ENCODE measurements at regions of chr16 and their contacts with region 1.

Region 1: GRCh38 chr16:35188288-35189155 is 1729.1 kb downstream of the TP53TG3F start:
- DNase-seq: no peak
- H3K4me3 ChIP-seq: no peak overlapping the region
- H3K27ac ChIP-seq: no peak overlapping the region
- H3K4me1 ChIP-seq: no peaks in the 10 kb centered on the region
- H3K27me3 ChIP-seq: no peaks in the 10 kb centered on the region
- CTCF ChIP-seq: peak in 1 of 6 experiments; percentile 15
- POLR2A ChIP-seq: no peak

Region 2: GRCh38 chr16:35134471-35134870 is 54.1 kb before region 1 on chr16:
- intact Hi-C with region 1: loop called in 1 of 2 experiments (anchors 10 kb)
- DNase-seq: no peak
- H3K4me3 ChIP-seq: no peak overlapping the region
- H3K27ac ChIP-seq: no peak overlapping the region
- H3K4me1 ChIP-seq: no peaks in the 10 kb centered on the region
- H3K27me3 ChIP-seq: no peaks in the 10 kb centered on the region
- CTCF ChIP-seq: no peak
- POLR2A ChIP-seq: no peak

Measured in adrenal gland (tissue), 19 donors.